Esophagus muscularis mucosa (tissue), 4 donors: ENCODE measurements at regions of chr7 and their contacts with region 1.

Region 1: GRCh38 chr7:132154695-132155471 is 421.4 kb downstream of the PLXNA4 start:
- DNase-seq: no peak
- H3K4me3 ChIP-seq: no peak overlapping the region
- H3K27ac ChIP-seq: no peak overlapping the region
- H3K4me1 ChIP-seq: no peaks in the 10 kb centered on the region
- H3K27me3 ChIP-seq: no peaks in the 10 kb centered on the region
- CTCF ChIP-seq: no peak
- EP300 ChIP-seq: no peak
- POLR2A ChIP-seq: no peak

Region 2: DNA sequence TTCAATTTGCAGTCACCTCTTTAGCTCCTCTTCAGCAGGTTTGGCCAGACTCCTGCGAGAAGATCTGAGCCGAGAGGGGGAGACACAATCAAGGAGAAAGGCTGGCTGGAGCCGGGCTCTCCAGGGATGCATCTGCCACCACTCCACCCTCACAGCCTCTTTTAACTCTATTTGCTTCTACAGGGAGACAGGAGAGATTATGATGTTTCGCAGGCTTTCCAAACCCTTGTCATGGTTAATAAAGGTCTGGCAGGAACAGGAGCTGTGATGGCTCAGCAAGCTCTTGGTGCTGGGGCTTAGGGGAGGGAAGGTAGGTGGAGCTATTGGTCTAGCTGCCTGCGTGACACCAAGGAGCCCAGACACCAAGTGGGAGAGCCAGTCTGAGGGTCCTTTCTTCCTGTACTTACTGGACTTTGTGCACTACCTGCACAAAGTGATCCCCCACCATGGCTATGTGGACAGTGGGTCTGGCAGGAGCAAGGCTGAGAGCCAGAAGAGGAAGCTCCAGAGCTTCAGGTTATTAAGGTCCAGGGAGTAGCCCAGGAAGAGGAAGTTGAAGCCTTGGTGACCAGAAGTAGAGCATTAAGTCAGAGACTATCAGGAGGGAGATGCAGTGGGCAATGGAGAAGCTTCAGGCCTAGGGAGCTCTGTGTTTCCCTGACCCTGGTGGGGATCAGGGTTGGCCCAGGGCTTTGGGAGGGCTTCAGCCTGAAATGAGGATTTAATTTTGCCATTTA is 150.2 kb before region 1 on chr7:
- intact Hi-C with region 1: loop called (anchors 5 kb)
- DNase-seq: no peak
- H3K4me3 ChIP-seq: no peak overlapping the region
- H3K27ac ChIP-seq: peak overlapping the region in 2 of 4 donors; percentile 25 to 50
- H3K4me1 ChIP-seq: peaks cover 0 to 13% (median 10%) of the 10 kb centered on the region in 4 donors
- H3K27me3 ChIP-seq: no peaks in the 10 kb centered on the region
- CTCF ChIP-seq: peak; percentile 36 to 58 (median 42)
- EP300 ChIP-seq: no peak
- POLR2A ChIP-seq: no peak

Region 3: GRCh38 chr7:132049462-132050304 is 105.2 kb before region 1 on chr7:
- intact Hi-C with region 1: no loop called
- DNase-seq: no peak
- H3K4me3 ChIP-seq: no peak overlapping the region
- H3K27ac ChIP-seq: no peak overlapping the region
- H3K4me1 ChIP-seq: peaks cover 0 to 37% (median 26%) of the 10 kb centered on the region in 4 donors
- H3K27me3 ChIP-seq: no peaks in the 10 kb centered on the region
- CTCF ChIP-seq: peak in 1 of 3 experiments; percentile 42
- EP300 ChIP-seq: no peak
- POLR2A ChIP-seq: no peak

Region 4: GRCh38 chr7:132206594-132206993 is 51.7 kb after region 1 on chr7:
- intact Hi-C with region 1: no loop called
- DNase-seq: no peak
- H3K4me3 ChIP-seq: no peak overlapping the region
- H3K27ac ChIP-seq: no peak overlapping the region
- H3K4me1 ChIP-seq: peaks cover 0 to 12% (median 0%) of the 10 kb centered on the region in 4 donors
- H3K27me3 ChIP-seq: no peaks in the 10 kb centered on the region
- CTCF ChIP-seq: no peak
- EP300 ChIP-seq: no peak
- POLR2A ChIP-seq: no peak